ENCODE measurements at regions of chr1 and their contacts with region 1.

Region 1: DNA sequence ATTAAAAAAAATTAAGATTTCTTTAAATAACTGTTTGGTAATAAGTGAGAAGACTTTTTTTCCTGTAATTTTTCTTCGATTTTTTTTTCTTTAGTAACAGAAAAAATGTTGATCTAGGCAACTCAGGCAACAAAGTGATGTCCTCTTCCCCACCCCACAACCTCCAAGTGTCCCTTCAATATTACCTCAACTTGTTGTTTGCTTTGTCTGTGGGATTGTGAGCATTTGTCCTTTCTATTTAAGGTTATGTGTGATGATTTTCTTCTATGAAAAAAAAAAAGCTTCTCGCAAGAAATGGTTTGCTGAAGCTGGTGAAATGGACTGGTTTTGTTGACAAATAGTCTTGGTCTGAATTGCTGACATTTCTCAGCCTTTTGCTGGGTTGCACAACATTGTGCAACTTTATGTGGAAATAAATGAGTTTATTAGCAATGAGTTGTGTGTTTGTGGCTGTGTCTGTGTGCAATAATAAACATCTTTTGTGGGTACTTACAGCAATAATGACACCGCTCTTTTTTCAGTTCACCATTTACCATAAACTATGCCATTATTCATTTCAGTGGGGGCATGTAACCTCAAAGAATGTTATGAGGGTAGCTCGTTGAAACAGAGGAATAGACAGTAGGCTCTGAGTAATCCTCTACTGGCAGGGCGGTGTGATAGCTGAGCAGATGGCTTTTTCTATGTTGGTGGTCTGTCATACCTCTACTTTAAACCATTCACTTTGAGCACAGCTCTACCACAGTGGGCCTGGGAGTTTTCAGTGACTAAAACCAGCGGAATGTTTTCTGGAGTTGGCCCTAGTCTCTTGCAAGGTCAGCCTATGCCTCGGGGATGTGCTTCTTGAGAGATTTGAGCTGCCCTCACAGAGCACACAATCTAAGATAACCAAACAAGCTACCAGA is 218.5 kb downstream of the HLX start:
- DNase-seq: no peak

Region 2: DNA sequence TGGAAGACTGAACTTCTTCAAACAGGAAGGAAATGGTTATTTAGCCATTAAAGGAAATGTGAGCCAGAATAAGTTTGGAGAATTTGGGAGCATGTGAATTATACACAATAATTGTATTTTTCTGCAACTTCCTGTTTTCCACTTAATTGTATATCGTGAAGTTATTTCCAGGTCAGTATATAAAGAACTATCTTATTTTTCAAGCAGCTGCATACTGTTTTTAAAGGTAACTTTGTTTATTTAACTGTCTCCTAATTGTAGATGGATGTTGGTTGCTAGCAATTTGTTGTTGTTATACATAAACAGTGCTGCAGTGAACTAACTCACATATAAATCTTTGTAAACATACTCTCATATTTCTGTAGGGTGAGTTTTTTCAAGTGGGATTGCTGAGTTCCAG is 38.2 kb before region 1 on chr1:
- intact Hi-C with region 1: loop called (anchors 5 kb)
- DNase-seq: no peak

Region 3: DNA sequence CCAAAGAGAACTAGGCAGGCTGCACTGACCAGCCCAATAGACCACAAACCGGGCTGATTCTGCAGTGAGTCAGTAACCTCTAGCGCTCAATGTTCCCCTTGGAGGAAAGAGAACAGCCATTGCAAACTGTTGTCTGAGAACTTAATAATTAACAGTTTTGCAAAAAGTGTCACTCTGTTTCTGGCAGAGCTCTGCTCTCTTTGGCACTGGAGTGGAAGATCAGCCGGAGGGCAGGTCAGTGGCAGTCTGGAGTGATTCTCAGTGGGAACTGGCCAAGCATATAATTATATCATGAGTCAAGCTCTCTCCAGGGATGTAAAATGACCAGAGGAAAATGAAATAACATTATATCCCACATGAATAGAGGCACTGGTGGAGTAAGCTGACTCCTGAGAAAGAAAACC is 19.8 kb after region 1 on chr1:
- intact Hi-C with region 1: loop called (anchors 1 kb)
- DNase-seq: no peak

Measured in cardiac septum (tissue), 1 donor.